Ovary (tissue), 10 donors: ENCODE measurements at regions of chrX and their contacts with region 1.

Region 1: GRCh38 chrX:103157496-103158320 is 57.2 kb upstream of the BEX4 start:
- DNase-seq: no peak
- H3K4me3 ChIP-seq: no peak overlapping the region
- H3K27ac ChIP-seq: no peak overlapping the region
- H3K4me1 ChIP-seq: no peaks in the 10 kb centered on the region
- H3K27me3 ChIP-seq: no peaks in the 10 kb centered on the region
- CTCF ChIP-seq: no peak
- EP300 ChIP-seq: no peak
- POLR2A ChIP-seq: no peak

Region 2: DNA sequence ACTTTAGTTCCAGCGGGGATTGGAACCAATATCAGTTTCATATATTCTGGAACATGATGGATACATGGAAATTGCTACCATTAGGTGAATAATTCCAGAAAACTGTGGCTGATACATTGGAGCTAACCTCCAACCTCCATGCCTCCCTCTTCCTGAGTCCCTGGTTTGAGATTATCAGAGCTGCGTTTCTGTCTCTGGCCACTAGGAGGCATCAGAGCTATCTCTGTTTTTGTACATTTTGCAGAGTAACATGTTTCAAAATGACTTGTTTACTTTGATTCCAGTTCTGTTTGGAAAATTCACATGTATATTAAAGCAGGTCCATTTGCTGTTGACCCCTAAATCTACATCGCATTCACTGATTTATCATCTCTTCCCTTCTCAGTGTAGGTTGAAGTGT is 223.1 kb before region 1 on chrX:
- intact Hi-C with region 1: loop called in 1 of 4 experiments (anchors 10 kb)
- DNase-seq: no peak
- H3K4me3 ChIP-seq: no peak overlapping the region
- H3K27ac ChIP-seq: no peak overlapping the region
- H3K4me1 ChIP-seq: no peaks in the 10 kb centered on the region
- H3K27me3 ChIP-seq: no peaks in the 10 kb centered on the region
- CTCF ChIP-seq: no peak
- EP300 ChIP-seq: no peak
- POLR2A ChIP-seq: no peak

Region 3: GRCh38 chrX:103367502-103367901 is 209.8 kb after region 1 on chrX:
- intact Hi-C with region 1: no loop called
- DNase-seq: no peak
- H3K4me3 ChIP-seq: no peak overlapping the region
- H3K27ac ChIP-seq: no peak overlapping the region
- H3K4me1 ChIP-seq: no peaks in the 10 kb centered on the region
- H3K27me3 ChIP-seq: no peaks in the 10 kb centered on the region
- CTCF ChIP-seq: no peak
- EP300 ChIP-seq: no peak
- POLR2A ChIP-seq: no peak